ENCODE measurements at regions of chr2 and their contacts with region 1.

Region 1: DNA sequence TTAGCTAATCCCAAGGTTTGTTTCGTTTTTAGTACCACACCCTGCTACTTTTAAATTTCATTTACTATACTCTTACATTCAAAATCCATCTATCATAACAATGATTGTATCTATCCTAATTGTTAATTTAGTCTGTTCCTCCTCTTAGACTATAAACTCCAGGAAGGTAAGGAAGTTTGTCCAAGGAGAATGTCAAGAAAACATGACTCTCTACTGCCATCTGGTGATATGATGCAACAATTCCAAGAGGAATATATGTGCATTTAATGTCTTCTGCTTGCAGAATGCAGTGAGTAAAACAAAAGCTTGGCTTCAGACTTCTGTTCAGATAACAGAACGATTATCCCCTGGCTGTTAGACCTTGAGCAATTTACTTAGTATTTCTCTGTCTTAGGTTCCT is 1267.1 kb downstream of the LRP1B start:
- DNase-seq: peak; percentile 13
- ATAC-seq: peak; percentile 66
- H3K4me3 ChIP-seq: no peak overlapping the region
- H3K27ac ChIP-seq: no peak overlapping the region
- H3K4me1 ChIP-seq: no peaks in the 10 kb centered on the region
- H3K27me3 ChIP-seq: no peaks in the 10 kb centered on the region
- CTCF ChIP-seq: peak; percentile 42 to 61 (median 52); a peak in 5 of 6 replicates
- EP300 ChIP-seq: no peak
- POLR2A ChIP-seq: no peak
- RAD21 ChIP-seq: peak; percentile 79

Region 2: DNA sequence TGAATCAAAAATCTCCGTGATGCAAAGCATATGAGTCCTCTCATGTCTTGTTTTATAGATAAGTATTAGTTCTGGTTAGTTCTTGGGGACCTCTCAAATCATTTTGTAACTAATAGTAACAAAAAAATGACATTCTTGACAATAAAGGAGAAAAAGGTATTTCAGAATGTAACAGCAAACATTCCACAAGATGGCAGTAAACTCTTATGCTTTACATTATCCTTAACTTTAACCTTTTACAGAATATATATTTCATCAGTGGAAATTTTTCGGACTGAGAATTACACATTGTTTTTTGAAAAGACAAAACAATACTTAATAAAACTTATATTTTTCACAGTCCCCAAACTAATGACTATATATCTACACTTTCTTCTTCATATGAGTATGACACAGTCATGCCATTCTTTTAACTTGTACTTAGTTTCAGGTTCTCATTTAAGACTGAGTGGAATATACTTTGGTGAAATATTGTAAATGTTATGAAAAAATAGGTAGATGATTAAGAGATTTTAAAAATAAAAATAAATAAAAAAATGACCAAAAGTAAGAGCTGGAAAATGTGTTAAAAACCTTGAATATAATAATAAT is 1940.6 kb before region 1 on chr2:
- CTCF ChIA-PET with region 1: interaction called, 3 read pairs
- POLR2A ChIA-PET with region 1: no interaction called
- RAD21 ChIA-PET with region 1: no interaction called
- SMC1A ChIA-PET with region 1: no interaction called
- in situ Hi-C with region 1: no loop called
- intact Hi-C with region 1: loop called (anchors 10 kb)
- DNase-seq: no peak
- ATAC-seq: 0 out of 3 replicates have a peak, but pooled peaks have one; percentile 20
- H3K4me3 ChIP-seq: no peak overlapping the region
- H3K27ac ChIP-seq: no peak overlapping the region
- H3K4me1 ChIP-seq: no peaks in the 10 kb centered on the region
- H3K27me3 ChIP-seq: no peaks in the 10 kb centered on the region
- CTCF ChIP-seq: peak in 1 of 3 experiments; percentile 25; a peak in 2 of 6 replicates
- EP300 ChIP-seq: no peak
- POLR2A ChIP-seq: no peak
- RAD21 ChIP-seq: peak; percentile 39

Region 3: GRCh38 chr2:139790807-139791752 is 1072.6 kb before region 1 on chr2:
- CTCF ChIA-PET with region 1: no interaction called
- POLR2A ChIA-PET with region 1: no interaction called
- RAD21 ChIA-PET with region 1: no interaction called
- SMC1A ChIA-PET with region 1: no interaction called
- in situ Hi-C with region 1: no loop called
- intact Hi-C with region 1: loop called (anchors 5 kb)
- DNase-seq: no peak
- ATAC-seq: peak; percentile 62
- H3K4me3 ChIP-seq: no peak overlapping the region
- H3K27ac ChIP-seq: no peak overlapping the region
- H3K4me1 ChIP-seq: no peaks in the 10 kb centered on the region
- H3K27me3 ChIP-seq: no peaks in the 10 kb centered on the region
- CTCF ChIP-seq: peak in 2 of 3 experiments; percentile 16 to 42; a peak in 1 of 6 replicates
- EP300 ChIP-seq: no peak
- POLR2A ChIP-seq: no peak
- RAD21 ChIP-seq: peak; percentile 38; the same call in 1 of the 2 replicates

Region 4: DNA sequence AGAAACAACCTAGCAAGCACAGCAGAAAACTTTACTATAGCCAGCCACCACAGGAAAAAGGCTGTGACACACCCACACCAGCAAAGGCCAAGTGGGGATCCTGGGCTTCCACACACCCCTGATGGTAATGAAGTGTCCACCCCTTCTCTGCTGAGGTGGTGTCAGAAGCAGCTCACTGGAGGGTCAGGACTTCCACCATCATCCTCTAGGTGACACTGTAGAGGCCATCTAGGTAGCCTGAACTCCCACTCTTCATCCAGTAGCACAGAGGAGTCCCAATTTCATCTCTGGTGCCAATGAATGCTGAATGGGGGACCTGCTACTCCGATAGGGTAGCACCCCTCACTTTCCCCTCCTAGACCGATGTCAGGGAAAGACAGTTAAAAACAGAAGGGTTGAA is 277.3 kb before region 1 on chr2:
- CTCF ChIA-PET with region 1: interaction called, 48 read pairs
- POLR2A ChIA-PET with region 1: no interaction called
- RAD21 ChIA-PET with region 1: interaction called, 18 read pairs
- SMC1A ChIA-PET with region 1: interaction called, 7 read pairs
- in situ Hi-C with region 1: loop called (anchors 10 kb)
- intact Hi-C with region 1: loop called (anchors 1 kb)
- DNase-seq: peak; percentile 7
- ATAC-seq: peak; percentile 100
- H3K4me3 ChIP-seq: no peak overlapping the region
- H3K27ac ChIP-seq: no peak overlapping the region
- H3K4me1 ChIP-seq: no peaks in the 10 kb centered on the region
- H3K27me3 ChIP-seq: no peaks in the 10 kb centered on the region
- CTCF ChIP-seq: peak; percentile 66 to 86 (median 69)
- EP300 ChIP-seq: no peak
- POLR2A ChIP-seq: no peak
- RAD21 ChIP-seq: peak; percentile 77

Region 5: GRCh38 chr2:140744379-140744778 is 119.3 kb before region 1 on chr2:
- CTCF ChIA-PET with region 1: interaction called, 3 read pairs
- POLR2A ChIA-PET with region 1: no interaction called
- RAD21 ChIA-PET with region 1: interaction called, 5 read pairs
- SMC1A ChIA-PET with region 1: no interaction called
- in situ Hi-C with region 1: no loop called
- intact Hi-C with region 1: loop called (anchors 5 kb)
- DNase-seq: no peak
- ATAC-seq: no peak
- H3K4me3 ChIP-seq: no peak overlapping the region
- H3K27ac ChIP-seq: no peak overlapping the region
- H3K4me1 ChIP-seq: no peaks in the 10 kb centered on the region
- H3K27me3 ChIP-seq: no peaks in the 10 kb centered on the region
- CTCF ChIP-seq: no peak
- EP300 ChIP-seq: no peak
- POLR2A ChIP-seq: no peak
- RAD21 ChIP-seq: no peak

Region 6: DNA sequence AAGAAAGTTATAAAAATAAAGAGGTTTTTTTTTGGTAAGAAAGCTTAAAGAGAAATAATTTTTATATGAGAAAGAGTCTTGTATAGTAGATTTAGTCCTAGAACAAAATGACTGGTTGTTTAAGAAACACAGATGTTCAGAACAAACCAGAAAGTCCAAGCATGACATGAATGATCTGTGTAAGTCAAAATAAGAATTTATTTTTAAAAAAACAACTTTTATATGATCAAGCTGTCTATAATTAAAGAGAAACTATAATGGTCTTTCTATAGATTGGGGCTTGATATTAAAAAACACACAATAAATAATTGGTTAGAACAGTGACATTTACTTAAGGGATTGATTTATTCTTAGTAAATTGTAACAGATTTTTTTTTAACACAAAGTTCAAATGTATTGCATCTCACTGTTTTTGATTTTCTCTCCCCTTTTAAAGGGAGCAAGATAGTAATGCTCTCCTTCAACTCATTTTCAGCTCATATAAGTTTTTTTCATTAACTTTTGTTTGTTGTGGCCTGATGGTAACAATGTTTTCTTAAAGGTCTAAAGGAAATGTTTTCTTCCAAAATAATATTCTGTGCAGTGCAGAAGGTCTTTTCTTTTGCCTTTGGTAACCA is 10.3 kb after region 1 on chr2:
- CTCF ChIA-PET with region 1: interaction called, 10 read pairs
- POLR2A ChIA-PET with region 1: no interaction called
- RAD21 ChIA-PET with region 1: interaction called, 5 read pairs
- SMC1A ChIA-PET with region 1: interaction called, 4 read pairs
- in situ Hi-C with region 1: no loop called
- intact Hi-C with region 1: no loop called
- DNase-seq: no peak
- ATAC-seq: no peak
- H3K4me3 ChIP-seq: no peak overlapping the region
- H3K27ac ChIP-seq: no peak overlapping the region
- H3K4me1 ChIP-seq: no peaks in the 10 kb centered on the region
- H3K27me3 ChIP-seq: no peaks in the 10 kb centered on the region
- CTCF ChIP-seq: no peak
- EP300 ChIP-seq: no peak
- POLR2A ChIP-seq: no peak
- RAD21 ChIP-seq: no peak

Region 7: GRCh38 chr2:140880573-140880972 is 16.9 kb after region 1 on chr2:
- CTCF ChIA-PET with region 1: interaction called, 14 read pairs
- POLR2A ChIA-PET with region 1: no interaction called
- RAD21 ChIA-PET with region 1: no interaction called
- SMC1A ChIA-PET with region 1: interaction called, 5 read pairs
- in situ Hi-C with region 1: no loop called
- intact Hi-C with region 1: no loop called
- DNase-seq: no peak
- ATAC-seq: no peak
- H3K4me3 ChIP-seq: no peak overlapping the region
- H3K27ac ChIP-seq: no peak overlapping the region
- H3K4me1 ChIP-seq: no peaks in the 10 kb centered on the region
- H3K27me3 ChIP-seq: no peaks in the 10 kb centered on the region
- CTCF ChIP-seq: no peak
- EP300 ChIP-seq: no peak
- POLR2A ChIP-seq: no peak
- RAD21 ChIP-seq: no peak